ENCODE measurements at regions of chr7 and their contacts with region 1.

Region 1: DNA sequence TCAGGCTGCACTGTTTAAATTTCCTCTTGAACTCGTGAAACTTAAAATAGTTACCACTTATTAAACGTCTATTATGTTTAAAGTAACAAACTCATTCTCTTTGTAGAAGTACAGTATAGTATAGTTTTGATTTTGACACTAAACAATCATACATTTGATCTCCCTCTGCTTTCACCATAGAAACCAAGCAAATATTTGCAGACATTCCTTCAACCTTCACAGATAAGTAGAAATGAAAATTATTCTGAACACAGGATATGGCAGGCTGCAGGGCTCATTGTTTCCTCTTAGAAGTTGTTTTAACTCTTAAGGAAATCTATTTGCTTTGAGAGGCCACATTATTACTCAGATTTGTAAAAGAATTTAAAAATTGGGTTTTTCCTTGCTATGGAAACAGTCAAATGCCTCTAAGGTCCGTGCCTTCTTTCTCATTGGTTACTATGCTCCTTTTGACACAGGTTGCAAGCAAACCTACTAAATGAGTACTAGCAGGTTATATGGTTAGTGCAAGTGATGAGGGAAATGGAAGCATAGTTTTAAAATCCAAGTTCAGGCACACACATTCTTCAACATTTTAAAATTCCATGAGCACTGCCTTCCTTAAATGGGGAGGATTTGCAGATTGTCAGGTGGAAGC is 92.8 kb upstream of the FAM133B start:
- DNase-seq: no peak
- H3K4me3 Mint-ChIP-seq: peak overlapping the region; percentile 57
- H3K27ac Mint-ChIP-seq: peak overlapping the region; percentile 95
- H3K4me1 Mint-ChIP-seq: peaks cover 90% of the 10 kb centered on the region
- H3K27me3 Mint-ChIP-seq: no peaks in the 10 kb centered on the region

Region 2: GRCh38 chr7:92633211-92633906 is 49.7 kb before region 1 on chr7:
- intact Hi-C with region 1: loop called (anchors 1 kb)
- DNase-seq: peak; percentile 48
- H3K4me3 Mint-ChIP-seq: peak overlapping the region; percentile 64
- H3K27ac Mint-ChIP-seq: peak overlapping the region; percentile 94
- H3K4me1 Mint-ChIP-seq: peaks cover 80% of the 10 kb centered on the region
- H3K27me3 Mint-ChIP-seq: no peaks in the 10 kb centered on the region

Region 3: GRCh38 chr7:92648067-92648466 is 35.0 kb before region 1 on chr7:
- intact Hi-C with region 1: loop called (anchors 1 kb)
- DNase-seq: no peak
- H3K4me3 Mint-ChIP-seq: peak overlapping the region; percentile 57
- H3K27ac Mint-ChIP-seq: peak overlapping the region; percentile 98
- H3K4me1 Mint-ChIP-seq: peaks cover 91% of the 10 kb centered on the region
- H3K27me3 Mint-ChIP-seq: no peaks in the 10 kb centered on the region

Region 4: DNA sequence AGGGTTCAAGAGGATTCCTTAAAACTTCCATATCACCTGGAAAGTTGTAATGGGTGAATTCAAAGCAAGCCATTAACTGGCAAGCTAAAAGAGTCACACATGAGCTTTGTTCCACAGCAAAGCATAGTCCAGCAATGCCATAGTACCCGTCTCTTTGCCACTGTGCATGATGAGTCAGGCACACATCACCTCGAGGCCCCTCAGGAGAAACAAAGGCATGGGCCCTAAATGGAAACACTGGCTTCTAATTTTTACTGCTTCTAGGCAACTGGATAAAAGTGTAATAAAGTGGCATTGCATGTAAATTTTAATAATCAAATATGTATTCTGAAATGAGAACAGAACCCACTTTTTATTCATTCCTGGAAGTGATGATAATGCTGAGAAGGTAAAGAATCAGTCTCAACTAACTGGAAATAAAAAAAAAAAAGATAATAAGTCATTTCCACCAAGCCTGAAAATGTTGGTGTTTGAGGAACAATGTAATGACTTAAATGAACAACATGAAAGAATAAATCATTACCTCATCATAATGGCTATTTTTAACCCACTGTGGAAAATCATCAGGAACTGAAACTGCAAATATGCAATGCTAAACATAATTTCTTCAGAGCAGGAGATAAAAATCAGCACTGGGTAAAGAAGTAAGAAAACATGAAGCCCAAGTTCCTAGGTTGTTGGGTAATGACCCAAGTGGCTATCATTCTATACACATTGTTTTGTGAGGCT is 48.5 kb after region 1 on chr7:
- intact Hi-C with region 1: loop called (anchors 1 kb)
- DNase-seq: no peak
- H3K4me3 Mint-ChIP-seq: peak overlapping the region; percentile 23
- H3K27ac Mint-ChIP-seq: peak overlapping the region; percentile 92
- H3K4me1 Mint-ChIP-seq: peaks cover 80% of the 10 kb centered on the region
- H3K27me3 Mint-ChIP-seq: no peaks in the 10 kb centered on the region

Region 5: GRCh38 chr7:92751902-92752901 is 69.2 kb after region 1 on chr7:
- intact Hi-C with region 1: no loop called
- DNase-seq: no peak
- H3K4me3 Mint-ChIP-seq: no peak overlapping the region
- H3K27ac Mint-ChIP-seq: peak overlapping the region; percentile 68
- H3K4me1 Mint-ChIP-seq: peaks cover 87% of the 10 kb centered on the region
- H3K27me3 Mint-ChIP-seq: no peaks in the 10 kb centered on the region

Region 6: DNA sequence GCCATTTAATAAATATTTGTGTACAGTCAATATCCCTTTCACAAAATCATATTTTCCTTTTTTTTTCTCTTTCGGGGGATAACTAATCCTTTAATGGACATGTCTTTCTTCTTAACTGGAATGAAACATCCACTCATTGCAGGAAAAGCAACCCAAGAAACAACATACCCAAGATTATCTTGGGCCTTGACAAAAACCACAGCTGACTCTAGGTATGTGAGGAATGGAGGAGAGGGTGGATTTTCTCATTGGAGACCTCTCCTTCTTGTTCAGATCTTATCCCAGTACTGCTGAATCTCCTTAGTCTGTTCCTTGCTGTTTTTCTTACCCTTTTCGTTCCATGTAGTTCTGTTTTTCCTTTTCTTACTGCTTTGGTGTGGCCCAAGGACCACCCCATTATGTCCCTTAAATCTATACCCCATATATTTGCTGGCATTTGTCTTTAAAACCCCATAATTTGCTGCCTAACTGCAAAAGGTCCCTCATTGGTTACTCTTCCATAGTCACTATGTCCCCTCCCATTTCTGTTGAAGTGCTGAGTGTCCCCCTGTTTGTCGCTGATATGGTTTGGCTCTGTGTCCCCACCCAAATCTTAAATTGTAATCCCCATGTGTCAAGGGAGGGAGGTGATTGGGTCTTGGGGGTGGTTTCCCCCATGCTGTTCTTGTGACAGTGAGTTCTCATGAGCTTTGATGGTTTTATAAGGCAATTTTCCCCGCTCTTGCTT is 160.2 kb after region 1 on chr7:
- intact Hi-C with region 1: no loop called
- DNase-seq: no peak
- H3K4me3 Mint-ChIP-seq: no peak overlapping the region
- H3K27ac Mint-ChIP-seq: no peak overlapping the region
- H3K4me1 Mint-ChIP-seq: peaks cover 21% of the 10 kb centered on the region
- H3K27me3 Mint-ChIP-seq: peaks cover 5% of the 10 kb centered on the region

Region 7: DNA sequence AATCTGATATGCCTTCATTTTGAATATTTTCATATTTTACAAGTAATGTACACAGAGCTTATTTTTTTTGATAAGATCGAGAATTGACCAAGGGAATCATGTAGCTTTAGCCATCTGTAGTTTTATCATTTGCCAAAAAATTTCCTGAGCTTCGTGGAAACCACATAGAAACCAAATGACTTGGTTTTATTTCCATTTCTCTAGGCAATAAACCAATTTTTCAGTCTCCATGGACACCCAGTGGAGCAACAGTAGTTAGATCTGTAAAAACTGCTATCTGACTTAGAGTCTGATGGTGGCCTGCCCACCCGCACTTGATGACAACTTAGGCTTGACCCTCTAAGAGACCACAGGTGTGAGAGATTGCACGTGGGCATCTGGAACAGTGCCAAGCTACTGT is 281.1 kb after region 1 on chr7:
- intact Hi-C with region 1: no loop called
- DNase-seq: no peak
- H3K4me3 Mint-ChIP-seq: no peak overlapping the region
- H3K27ac Mint-ChIP-seq: no peak overlapping the region
- H3K4me1 Mint-ChIP-seq: peaks cover 4% of the 10 kb centered on the region
- H3K27me3 Mint-ChIP-seq: peaks cover 3% of the 10 kb centered on the region

Region 8: DNA sequence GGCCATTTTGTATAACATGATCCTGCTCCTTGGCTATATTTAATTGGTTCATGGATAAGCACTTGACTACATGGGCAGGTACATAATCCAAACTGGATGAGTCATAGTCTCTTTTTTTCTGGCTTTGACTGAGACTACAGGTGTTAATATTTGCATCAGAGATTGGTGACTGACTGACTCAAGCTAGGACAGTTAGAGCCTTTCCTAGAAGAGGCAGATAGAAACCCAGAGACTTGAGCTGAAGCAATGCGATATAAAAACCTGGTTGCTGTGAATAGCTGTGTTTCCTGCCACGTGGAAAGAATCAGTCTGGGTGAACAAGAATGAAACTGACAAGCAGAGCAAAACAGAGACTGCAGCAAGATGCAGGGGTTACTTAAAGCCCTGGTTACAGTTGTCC is 353.8 kb after region 1 on chr7:
- intact Hi-C with region 1: loop called (anchors 1 kb)
- DNase-seq: peak; percentile 53
- H3K4me3 Mint-ChIP-seq: no peak overlapping the region
- H3K27ac Mint-ChIP-seq: peak overlapping the region; percentile 85
- H3K4me1 Mint-ChIP-seq: peaks cover 50% of the 10 kb centered on the region
- H3K27me3 Mint-ChIP-seq: no peaks in the 10 kb centered on the region

Region 9: DNA sequence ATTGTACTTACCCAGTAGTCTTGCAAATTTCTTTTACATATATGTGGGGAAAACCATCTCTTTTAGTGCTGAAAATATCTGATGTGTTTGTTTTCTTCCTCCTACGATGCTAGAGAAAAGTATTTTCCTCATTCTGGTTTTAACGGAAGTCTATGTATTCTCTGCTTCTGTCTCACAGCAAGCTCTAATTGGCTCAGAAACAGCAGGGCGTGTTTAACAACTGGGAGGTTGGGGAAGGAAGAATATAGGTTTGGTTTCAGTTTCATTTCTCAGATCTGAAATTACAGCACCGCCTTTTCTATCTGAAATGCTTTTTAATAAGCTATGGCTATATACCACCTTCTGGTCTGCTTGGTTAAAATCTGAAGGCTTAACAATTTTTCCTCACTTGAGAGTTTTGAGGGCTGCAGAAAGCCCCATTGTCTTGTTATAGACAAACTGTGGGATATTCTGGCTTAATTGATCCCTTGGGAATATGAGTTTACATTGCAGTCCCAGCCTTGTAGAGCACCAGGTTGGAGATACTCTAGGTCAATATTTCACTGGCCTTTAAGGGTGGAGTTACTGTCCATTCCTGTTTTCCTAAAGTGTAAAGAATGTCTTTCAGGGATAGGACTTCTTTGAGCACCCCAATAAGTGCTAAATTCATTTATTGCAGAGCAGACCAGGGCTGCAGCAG is 435.0 kb after region 1 on chr7 and contains the start of gene SAMD9:
- intact Hi-C with region 1: loop called (anchors 2 kb)
- DNase-seq: peak; percentile 63
- H3K4me3 Mint-ChIP-seq: peak within 1 kb of the TSS; percentile 91
- H3K27ac Mint-ChIP-seq: peak within 1 kb of the TSS; percentile 82
- H3K4me1 Mint-ChIP-seq: peaks cover 60% of the 10 kb centered on the region
- H3K27me3 Mint-ChIP-seq: no peaks in the 10 kb centered on the region
- total RNA-seq, gene SAMD9: 11.5 and 11.8 TPM in 2 replicates